ENCODE measurements at regions of chr6 and their contacts with region 1.

Region 1: DNA sequence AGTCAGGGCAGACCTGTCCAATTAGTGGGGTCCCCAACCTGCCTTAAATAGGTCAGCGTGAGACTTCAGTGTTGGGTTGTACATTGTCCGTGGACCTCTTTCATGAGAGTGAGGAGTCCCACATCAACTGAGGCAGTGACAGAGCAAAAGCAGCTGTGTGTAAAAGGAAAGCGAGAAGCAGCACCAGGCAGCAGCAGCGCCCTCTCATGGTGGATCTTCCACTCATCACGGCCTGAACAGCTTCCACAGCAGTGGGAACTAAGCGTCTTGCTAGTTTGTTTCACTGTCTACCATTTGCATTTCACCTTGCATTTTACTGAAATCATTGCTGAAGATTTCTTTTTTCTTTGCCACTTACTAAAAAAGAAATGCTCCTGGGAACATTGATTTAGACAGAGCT is 333.8 kb downstream of the PKHD1 start:
- DNase-seq: no peak
- ATAC-seq: peak; percentile 68
- H3K4me3 ChIP-seq: no peak overlapping the region
- H3K27ac ChIP-seq: no peak overlapping the region
- H3K4me1 ChIP-seq: no peaks in the 10 kb centered on the region
- H3K27me3 ChIP-seq: no peaks in the 10 kb centered on the region
- CTCF ChIP-seq: peak; percentile 44 to 53 (median 47); a peak in 5 of 6 replicates
- EP300 ChIP-seq: no peak
- POLR2A ChIP-seq: no peak
- RAD21 ChIP-seq: peak; percentile 47

Region 2: DNA sequence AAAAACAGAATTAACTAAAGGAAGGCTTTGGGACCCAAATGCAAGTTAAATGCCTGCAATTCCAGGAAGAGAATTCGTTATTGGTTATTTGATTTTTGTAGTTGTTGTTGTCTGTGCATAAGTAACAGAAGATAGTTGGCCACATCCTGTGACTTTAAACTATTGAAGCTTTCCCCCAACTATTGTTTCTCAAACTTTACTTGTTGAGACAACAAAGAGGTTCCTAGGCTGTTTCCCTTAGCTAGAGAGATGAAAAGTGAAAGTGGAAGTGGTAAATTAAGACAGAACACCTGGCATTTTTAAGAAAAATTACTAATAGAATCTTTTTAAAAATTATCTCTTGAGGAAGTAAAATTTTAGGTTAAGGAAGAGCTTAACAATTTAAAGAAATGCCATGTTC is 191.4 kb before region 1 on chr6:
- CTCF ChIA-PET with region 1: interaction called, 8 read pairs
- POLR2A ChIA-PET with region 1: no interaction called
- RAD21 ChIA-PET with region 1: interaction called, 6 read pairs
- SMC1A ChIA-PET with region 1: interaction called, 5 read pairs
- in situ Hi-C with region 1: no loop called
- intact Hi-C with region 1: loop called (anchors 5 kb)
- DNase-seq: peak; percentile 19
- ATAC-seq: peak; percentile 92
- H3K4me3 ChIP-seq: no peak overlapping the region
- H3K27ac ChIP-seq: no peak overlapping the region
- H3K4me1 ChIP-seq: no peaks in the 10 kb centered on the region
- H3K27me3 ChIP-seq: no peaks in the 10 kb centered on the region; a peak in 1 of 4 replicates
- CTCF ChIP-seq: no peak
- EP300 ChIP-seq: no peak
- POLR2A ChIP-seq: no peak
- RAD21 ChIP-seq: no peak

Region 3: DNA sequence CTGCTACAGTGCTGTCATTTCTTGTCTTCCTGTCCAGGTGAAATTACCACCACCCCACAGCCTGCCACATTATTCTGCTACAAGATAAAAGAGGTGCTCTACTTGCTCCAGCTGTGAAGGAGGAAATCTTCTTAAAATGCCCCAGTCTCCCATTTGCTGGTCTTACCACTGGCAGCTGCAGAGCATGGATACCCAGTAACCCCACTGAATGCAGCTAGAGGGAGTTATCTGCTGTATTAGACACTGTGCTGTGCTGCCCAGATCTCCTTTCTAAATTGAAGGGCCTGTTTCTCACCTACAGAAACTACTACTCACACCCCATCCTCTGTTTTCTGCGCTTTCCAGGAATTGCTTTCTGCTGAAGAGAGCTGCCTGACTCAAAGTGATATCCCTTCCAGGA is 184.0 kb before region 1 on chr6:
- CTCF ChIA-PET with region 1: interaction called, 18 read pairs
- POLR2A ChIA-PET with region 1: no interaction called
- RAD21 ChIA-PET with region 1: interaction called, 11 read pairs
- SMC1A ChIA-PET with region 1: interaction called, 10 read pairs
- in situ Hi-C with region 1: no loop called
- intact Hi-C with region 1: loop called (anchors 5 kb)
- DNase-seq: no peak
- ATAC-seq: peak; percentile 80
- H3K4me3 ChIP-seq: no peak overlapping the region
- H3K27ac ChIP-seq: no peak overlapping the region
- H3K4me1 ChIP-seq: no peaks in the 10 kb centered on the region
- H3K27me3 ChIP-seq: no peaks in the 10 kb centered on the region; a peak in 2 of 4 replicates
- CTCF ChIP-seq: peak in 2 of 3 experiments; percentile 4 to 30; a peak in 2 of 6 replicates
- EP300 ChIP-seq: no peak
- POLR2A ChIP-seq: no peak
- RAD21 ChIP-seq: no peak

Region 4: DNA sequence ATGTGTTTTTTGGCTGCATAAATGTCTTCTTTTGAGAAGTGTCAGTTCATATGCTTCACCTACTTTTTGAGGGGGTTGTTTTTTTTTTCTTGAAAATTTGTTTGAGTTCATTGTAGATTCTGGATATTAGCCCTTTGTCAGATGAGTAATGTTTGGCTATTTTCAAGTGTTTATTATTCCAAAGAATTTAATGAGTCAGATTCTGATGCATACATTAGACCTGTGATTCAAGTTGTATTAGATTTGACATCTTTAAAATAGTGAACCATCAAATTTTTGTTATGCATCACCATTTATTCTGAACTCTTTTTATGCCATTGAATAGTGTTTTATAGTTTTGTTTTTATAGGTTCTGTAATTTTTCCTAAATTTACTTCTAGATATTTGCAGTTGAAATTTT is 14.5 kb after region 1 on chr6:
- CTCF ChIA-PET with region 1: interaction called, 15 read pairs
- POLR2A ChIA-PET with region 1: no interaction called
- RAD21 ChIA-PET with region 1: interaction called, 3 read pairs
- SMC1A ChIA-PET with region 1: interaction called, 3 read pairs
- in situ Hi-C with region 1: no loop called
- intact Hi-C with region 1: no loop called
- DNase-seq: no peak
- ATAC-seq: no peak
- H3K4me3 ChIP-seq: no peak overlapping the region
- H3K27ac ChIP-seq: no peak overlapping the region
- H3K4me1 ChIP-seq: no peaks in the 10 kb centered on the region
- H3K27me3 ChIP-seq: no peaks in the 10 kb centered on the region
- CTCF ChIP-seq: no peak
- EP300 ChIP-seq: no peak
- POLR2A ChIP-seq: no peak
- RAD21 ChIP-seq: no peak

Region 5: DNA sequence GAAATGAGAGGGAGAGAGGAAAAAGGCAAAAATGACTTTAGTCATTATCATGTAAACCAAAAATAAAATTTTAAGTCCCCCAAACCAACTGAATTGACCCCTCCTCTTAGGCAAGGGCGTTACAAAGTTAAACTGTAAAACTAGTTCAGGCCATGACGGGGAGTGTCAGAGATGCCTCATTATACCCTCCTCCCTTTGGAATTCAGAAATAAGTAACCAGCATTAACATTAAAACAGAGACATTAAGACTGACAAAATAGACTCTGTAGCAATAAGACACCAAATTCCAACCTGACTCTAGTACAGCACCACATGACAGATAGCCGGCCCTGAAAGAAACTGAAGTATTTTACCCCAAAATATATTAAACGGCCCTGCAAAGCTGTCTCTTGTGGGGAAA is 182.9 kb after region 1 on chr6:
- CTCF ChIA-PET with region 1: no interaction called
- POLR2A ChIA-PET with region 1: no interaction called
- RAD21 ChIA-PET with region 1: no interaction called
- SMC1A ChIA-PET with region 1: no interaction called
- in situ Hi-C with region 1: no loop called
- intact Hi-C with region 1: no loop called
- DNase-seq: no peak
- ATAC-seq: no peak
- H3K4me3 ChIP-seq: no peak overlapping the region
- H3K27ac ChIP-seq: no peak overlapping the region
- H3K4me1 ChIP-seq: no peaks in the 10 kb centered on the region
- H3K27me3 ChIP-seq: no peaks in the 10 kb centered on the region; a peak in 1 of 4 replicates
- CTCF ChIP-seq: no peak
- EP300 ChIP-seq: no peak
- POLR2A ChIP-seq: no peak
- RAD21 ChIP-seq: no peak

Measured in GM12878 (cell line).